ENCODE measurements at regions of chr18 and their contacts with region 1.

Region 1: DNA sequence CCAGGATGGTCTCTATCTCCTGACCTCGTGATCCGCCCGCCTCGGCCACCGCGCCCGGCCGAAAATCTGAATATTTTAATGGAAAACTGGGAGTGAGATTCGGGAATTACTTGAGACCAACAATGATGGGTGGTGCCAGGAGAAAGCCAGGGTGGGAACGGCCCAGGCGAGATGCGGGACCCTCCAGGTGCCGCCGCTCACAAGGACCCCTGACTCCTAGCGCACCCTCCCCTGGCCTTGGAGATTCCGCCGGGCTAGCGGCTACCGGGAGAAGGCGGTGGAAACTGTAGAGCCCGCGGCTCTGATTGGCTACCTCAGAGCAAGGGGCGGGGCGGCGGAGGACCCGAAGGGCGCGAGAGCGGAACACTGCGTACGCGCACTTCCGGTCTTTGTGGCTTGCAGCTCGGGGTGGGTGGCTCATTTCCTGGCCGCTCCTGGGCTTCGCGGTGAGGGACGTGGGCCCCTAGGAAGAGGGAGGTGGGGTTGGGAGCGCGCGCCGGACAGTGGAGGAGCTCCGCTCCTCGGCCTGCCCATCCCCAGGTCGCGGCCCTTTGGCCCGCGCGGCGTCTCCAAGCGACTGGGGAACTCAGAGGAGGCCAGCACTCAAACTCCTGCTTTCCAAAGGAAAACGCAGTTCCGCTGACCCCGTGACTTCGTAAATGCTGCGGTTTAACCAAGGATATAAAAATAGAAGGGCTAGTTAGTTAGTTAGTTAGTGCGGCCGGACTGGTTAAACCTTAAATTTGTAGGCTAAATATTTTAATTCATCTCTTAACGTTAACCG is at the start of gene ZNF397:
- DNase-seq: peak; percentile 89 to 99
- H3K4me3 ChIP-seq: peak within 1 kb of the TSS; percentile 69 to 74
- H3K27ac ChIP-seq: peak within 1 kb of the TSS; percentile 97 to 99
- H3K4me1 ChIP-seq: peaks cover 3 to 10% of the 10 kb centered on the region in 2 donors
- H3K27me3 ChIP-seq: no peaks in the 10 kb centered on the region
- CTCF ChIP-seq: no peak
- total RNA-seq, gene ZNF397: 13.9 TPM

Region 2: GRCh38 chr18:33960417-33960816 is 1280.4 kb before region 1 on chr18:
- intact Hi-C with region 1: no loop called
- DNase-seq: no peak
- H3K4me3 ChIP-seq: no peak overlapping the region
- H3K27ac ChIP-seq: no peak overlapping the region
- H3K4me1 ChIP-seq: no peaks in the 10 kb centered on the region
- H3K27me3 ChIP-seq: no peaks in the 10 kb centered on the region
- CTCF ChIP-seq: no peak

Region 3: GRCh38 chr18:35005963-35006577 is 234.8 kb before region 1 on chr18:
- intact Hi-C with region 1: loop called (anchors 5 kb)
- DNase-seq: no peak
- H3K4me3 ChIP-seq: no peak overlapping the region
- H3K27ac ChIP-seq: no peak overlapping the region
- H3K4me1 ChIP-seq: peaks cover 0 to 4% of the 10 kb centered on the region in 2 donors
- H3K27me3 ChIP-seq: no peaks in the 10 kb centered on the region
- CTCF ChIP-seq: peak; percentile 53 to 77 (median 57)

Region 4: DNA sequence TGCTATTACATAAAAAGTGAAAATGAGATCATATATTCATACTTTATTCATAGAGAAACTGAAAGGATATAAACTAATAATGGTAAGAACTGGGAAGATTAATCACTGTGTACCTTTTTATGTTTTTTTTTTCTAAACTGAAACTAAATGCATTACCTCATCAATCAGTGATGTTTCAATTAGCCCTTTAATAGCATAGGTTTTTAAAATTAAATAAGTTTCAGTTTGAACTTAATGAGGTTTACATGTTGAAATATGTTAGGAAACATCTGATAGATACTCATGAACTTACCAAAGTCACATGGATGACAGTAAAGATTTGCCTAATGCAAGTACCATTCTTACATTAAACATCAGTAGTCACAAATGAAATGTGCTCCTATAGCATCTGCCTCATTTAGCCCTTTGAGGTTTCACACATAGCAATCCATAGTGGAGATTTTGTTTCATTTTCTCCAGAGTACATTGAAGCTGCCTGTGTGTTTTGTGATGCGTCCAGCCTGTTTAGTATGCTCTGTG is 190.8 kb before region 1 on chr18:
- intact Hi-C with region 1: no loop called
- DNase-seq: no peak
- H3K4me3 ChIP-seq: peak overlapping the region in 1 of 2 donors; percentile 16
- H3K27ac ChIP-seq: peak overlapping the region in 1 of 2 donors; percentile 6
- H3K4me1 ChIP-seq: peaks cover 0 to 25% of the 10 kb centered on the region in 2 donors
- H3K27me3 ChIP-seq: no peaks in the 10 kb centered on the region
- CTCF ChIP-seq: no peak

Region 5: DNA sequence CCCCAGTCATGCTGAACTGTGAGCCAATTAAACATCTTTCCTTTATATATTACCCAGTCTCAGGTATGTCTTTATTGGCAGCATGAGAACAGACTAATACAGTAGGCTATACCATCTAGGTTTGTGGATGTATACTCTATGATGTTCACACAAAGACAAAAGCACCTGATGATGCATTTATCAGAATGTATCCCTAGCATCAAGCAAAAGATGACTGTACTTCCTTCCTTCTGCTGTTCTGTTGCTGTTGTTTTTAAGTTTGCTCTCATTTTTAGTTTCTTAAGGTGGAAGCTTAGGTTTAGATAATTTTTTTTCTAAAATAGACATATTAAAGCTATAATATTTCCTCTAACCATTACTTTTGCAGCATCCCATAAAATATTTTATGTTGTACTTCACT is 36.8 kb after region 1 on chr18:
- intact Hi-C with region 1: no loop called
- DNase-seq: no peak
- H3K4me3 ChIP-seq: no peak overlapping the region
- H3K27ac ChIP-seq: no peak overlapping the region
- H3K4me1 ChIP-seq: no peaks in the 10 kb centered on the region
- H3K27me3 ChIP-seq: no peaks in the 10 kb centered on the region
- CTCF ChIP-seq: no peak

Region 6: DNA sequence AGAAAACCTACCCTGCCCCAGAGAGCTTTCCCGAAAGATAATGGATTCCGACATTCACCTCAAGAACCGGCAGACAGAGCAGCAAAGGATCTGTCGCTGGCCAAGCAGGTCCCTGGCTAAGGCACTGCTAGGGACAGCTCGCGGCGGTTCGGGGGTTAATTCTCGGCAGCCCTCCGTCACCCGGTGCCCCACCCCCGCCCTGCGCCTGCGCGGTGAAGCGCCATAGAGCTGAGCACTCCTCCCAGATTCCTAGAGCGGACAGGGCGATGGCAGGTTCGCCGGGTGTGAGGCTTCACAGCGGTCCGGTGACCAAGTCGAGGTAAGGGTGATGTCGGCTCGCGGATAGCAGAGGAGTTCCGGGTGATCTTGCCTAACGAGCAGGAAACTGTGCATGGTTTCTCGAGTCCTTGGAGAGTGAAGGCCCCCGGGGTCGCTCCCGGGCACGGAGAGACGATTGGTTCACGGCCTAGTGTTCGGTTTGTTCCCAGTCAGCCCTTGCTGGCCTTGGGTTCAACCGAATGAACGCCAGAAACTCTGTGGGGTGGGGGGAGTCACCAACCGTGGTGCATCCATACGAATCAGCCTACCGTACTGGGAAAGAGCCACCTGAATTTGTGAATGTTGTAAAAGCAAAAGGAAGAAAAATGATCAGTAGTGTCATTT is 49.3 kb after region 1 on chr18 and contains the start of gene ZSCAN30:
- intact Hi-C with region 1: loop called (anchors 1 kb)
- DNase-seq: peak; percentile 79 to 97
- H3K4me3 ChIP-seq: peak within 1 kb of the TSS; percentile 73 to 86
- H3K27ac ChIP-seq: peak within 1 kb of the TSS; percentile 82 to 86
- H3K4me1 ChIP-seq: peaks cover 3 to 11% of the 10 kb centered on the region in 2 donors
- H3K27me3 ChIP-seq: no peaks in the 10 kb centered on the region
- CTCF ChIP-seq: no peak
- total RNA-seq, gene ZSCAN30: 7.5 TPM

Region 7: GRCh38 chr18:35497370-35498197 is 256.7 kb after region 1 on chr18 and contains the start of gene INO80C:
- intact Hi-C with region 1: loop called (anchors 5 kb)
- DNase-seq: peak; percentile 41 to 94
- H3K4me3 ChIP-seq: peak within 1 kb of the TSS; percentile 68 to 74
- H3K27ac ChIP-seq: peak within 1 kb of the TSS; percentile 90 to 92
- H3K4me1 ChIP-seq: peaks cover 0 to 14% of the 10 kb centered on the region in 2 donors
- H3K27me3 ChIP-seq: no peaks in the 10 kb centered on the region
- CTCF ChIP-seq: no peak
- total RNA-seq, gene INO80C: 11.2 TPM

Region 8: GRCh38 chr18:35972197-35973052 is 731.6 kb after region 1 on chr18 and contains the start of gene RMP24:
- intact Hi-C with region 1: loop called (anchors 2 kb)
- DNase-seq: peak; percentile 54 to 95
- H3K4me3 ChIP-seq: peak within 1 kb of the TSS; percentile 85 to 96
- H3K27ac ChIP-seq: peak within 1 kb of the TSS; percentile 89
- H3K4me1 ChIP-seq: peaks cover 4 to 19% of the 10 kb centered on the region in 2 donors
- H3K27me3 ChIP-seq: no peaks in the 10 kb centered on the region
- CTCF ChIP-seq: no peak

Measured in ascending aorta (tissue), 2 donors.